ENCODE measurements at regions of chr12 and their contacts with region 1.

Region 1: GRCh38 chr12:65556681-65557437 is 267.4 kb upstream of the HMGA2 start:
- DNase-seq: peak; percentile 80 to 82
- H3K4me3 ChIP-seq: no peak overlapping the region
- H3K4me3 Mint-ChIP-seq: no peak overlapping the region
- H3K27ac Mint-ChIP-seq: no peak overlapping the region
- H3K4me1 ChIP-seq: peaks cover 9% of the 10 kb centered on the region
- H3K4me1 Mint-ChIP-seq: no peaks in the 10 kb centered on the region
- H3K27me3 ChIP-seq: no peaks in the 10 kb centered on the region
- H3K27me3 Mint-ChIP-seq: no peaks in the 10 kb centered on the region
- CTCF ChIP-seq: peak; percentile 81 to 85

Region 2: DNA sequence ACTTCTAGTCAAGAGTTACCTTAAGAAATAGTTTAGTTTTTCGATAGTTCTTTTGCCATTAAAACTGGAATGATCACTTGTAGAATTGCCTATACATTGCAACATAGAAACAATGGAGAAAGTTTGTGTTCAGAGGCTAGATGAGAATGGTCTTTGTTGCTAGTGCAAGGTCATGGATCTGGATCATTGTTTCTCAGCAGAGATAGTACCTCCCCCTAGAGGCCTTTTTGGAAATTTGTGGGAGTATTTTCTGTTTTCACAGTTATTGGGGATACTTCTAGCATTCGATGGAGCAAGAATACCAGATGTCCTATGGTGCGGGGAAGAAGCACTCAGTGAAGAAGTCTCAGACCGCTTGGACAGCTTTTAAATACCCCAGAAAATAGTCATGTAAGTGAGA is 128.7 kb after region 1 on chr12:
- CTCF ChIA-PET with region 1: no interaction called
- POLR2A ChIA-PET with region 1: no interaction called
- intact Hi-C with region 1: loop called (anchors 1 kb)
- DNase-seq: peak in 1 of 2 experiments; percentile 26
- H3K4me3 ChIP-seq: no peak overlapping the region
- H3K4me3 Mint-ChIP-seq: no peak overlapping the region
- H3K27ac Mint-ChIP-seq: no peak overlapping the region
- H3K4me1 ChIP-seq: no peaks in the 10 kb centered on the region
- H3K4me1 Mint-ChIP-seq: no peaks in the 10 kb centered on the region
- H3K27me3 ChIP-seq: no peaks in the 10 kb centered on the region
- H3K27me3 Mint-ChIP-seq: no peaks in the 10 kb centered on the region
- CTCF ChIP-seq: peak; percentile 50 to 64